IMR-90 (cell line): ENCODE measurements at regions of chr6 and their contacts with region 1.

Region 1: DNA sequence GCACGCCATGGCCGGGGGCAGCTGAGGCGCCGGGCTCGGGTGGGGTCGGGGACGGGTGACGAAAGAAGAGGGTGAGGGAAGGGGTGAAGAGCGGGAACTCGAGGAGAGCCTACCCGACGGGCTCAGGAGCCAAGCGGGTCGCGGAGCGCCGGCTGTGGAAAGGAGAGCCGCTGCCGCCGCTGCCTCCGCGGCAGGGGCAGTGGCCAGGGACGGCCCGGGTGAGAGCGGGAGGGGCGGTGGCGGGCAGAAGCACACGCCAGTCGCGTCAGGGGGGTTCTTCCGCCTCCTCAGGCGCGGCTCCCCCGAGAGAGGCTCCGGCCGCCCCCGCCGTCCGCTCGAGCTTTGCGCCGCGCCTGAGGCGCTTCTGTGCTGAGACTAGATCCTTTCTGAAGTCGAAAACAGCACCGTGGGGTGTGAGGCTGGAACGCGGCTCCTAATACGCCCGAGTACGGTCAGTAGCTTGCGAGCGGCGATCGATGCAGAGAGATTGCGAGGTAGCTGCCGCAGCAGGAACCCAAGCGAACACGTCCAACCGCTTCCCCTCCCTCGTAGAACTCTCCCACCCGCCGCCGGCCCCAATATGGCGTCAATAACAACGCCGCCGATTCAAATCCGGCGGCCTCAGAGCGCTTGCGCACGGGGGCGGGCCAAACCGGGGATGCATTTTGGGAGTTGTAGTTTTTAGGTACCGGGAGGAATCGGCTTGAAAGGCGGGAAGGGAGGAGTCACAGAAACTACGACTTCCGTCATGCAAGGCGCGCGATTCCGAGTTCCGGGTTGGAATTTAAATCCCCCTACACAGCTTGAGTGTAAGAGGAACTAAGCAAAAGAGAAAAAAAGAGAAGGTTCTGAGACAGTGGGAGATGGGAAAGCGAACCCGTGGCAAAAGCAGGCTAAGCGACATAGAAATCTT is at the start of gene AKIRIN2:
- DNase-seq: peak; percentile 99
- ATAC-seq: peak; percentile 74
- H3K4me3 ChIP-seq: peak within 1 kb of the TSS; percentile 59
- H3K27ac ChIP-seq: peak within 1 kb of the TSS; percentile 87
- H3K4me1 ChIP-seq: peaks cover 10% of the 10 kb centered on the region
- H3K27me3 ChIP-seq: no peaks in the 10 kb centered on the region
- CTCF ChIP-seq: no peak
- POLR2A ChIP-seq: peak; percentile 97
- RAD21 ChIP-seq: no peak
- total RNA-seq, gene AKIRIN2: 7.9 and 10.8 TPM in 2 replicates

Region 2: DNA sequence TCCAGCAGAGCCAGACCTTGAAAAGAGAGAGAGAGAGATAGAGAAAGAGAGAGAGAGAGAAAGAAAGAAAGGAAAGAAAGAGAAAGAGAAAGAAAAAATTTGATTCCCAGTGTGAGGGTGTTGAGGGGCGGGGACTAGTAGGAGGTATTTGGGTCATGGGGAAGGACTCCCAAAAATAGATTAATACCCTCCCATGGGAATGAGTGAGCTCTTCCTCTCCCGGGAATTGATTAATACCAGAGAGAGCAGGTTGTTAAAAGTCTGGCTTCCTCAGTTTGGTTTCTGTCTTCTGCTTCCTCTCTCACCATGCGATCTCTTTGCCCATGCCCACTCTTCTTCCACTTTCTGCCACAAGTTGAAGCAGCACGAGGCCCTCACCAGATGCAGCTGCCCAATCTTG is 323.0 kb before region 1 on chr6:
- CTCF ChIA-PET with region 1: no interaction called
- POLR2A ChIA-PET with region 1: no interaction called
- dilution Hi-C with region 1: no loop called
- in situ Hi-C with region 1: no loop called
- intact Hi-C with region 1: no loop called
- DNase-seq: no peak
- ATAC-seq: no peak
- H3K4me3 ChIP-seq: no peak overlapping the region
- H3K27ac ChIP-seq: no peak overlapping the region
- H3K4me1 ChIP-seq: no peaks in the 10 kb centered on the region
- H3K27me3 ChIP-seq: no peaks in the 10 kb centered on the region
- CTCF ChIP-seq: no peak
- POLR2A ChIP-seq: no peak
- RAD21 ChIP-seq: no peak

Region 3: DNA sequence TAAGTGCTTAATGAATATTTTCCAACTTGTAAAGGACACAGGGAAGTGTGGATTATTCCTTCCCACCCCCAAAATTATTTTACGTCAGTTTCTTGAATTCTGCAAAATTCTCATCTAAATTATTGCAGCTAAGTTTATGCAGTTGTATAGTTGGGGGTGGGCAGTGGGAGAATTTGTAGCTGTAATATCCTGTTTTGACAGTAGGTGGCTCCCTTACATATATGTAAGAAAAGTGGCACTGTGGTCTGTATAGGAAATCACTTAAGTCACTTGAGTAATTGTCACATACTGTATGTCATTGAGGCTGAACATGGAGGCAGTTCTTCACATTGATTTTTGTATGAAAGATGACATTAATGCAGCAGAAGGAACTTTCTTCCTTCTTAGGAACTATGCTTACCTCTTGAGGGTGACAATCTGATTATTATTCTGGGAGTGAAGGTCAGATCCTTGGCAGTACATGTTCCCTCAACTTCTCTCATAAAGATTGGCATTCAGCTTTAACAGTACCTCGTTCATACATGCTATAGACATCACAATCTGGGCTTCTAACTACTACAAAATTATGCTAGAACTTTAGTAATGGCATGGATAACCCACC is 308.8 kb before region 1 on chr6:
- CTCF ChIA-PET with region 1: no interaction called
- POLR2A ChIA-PET with region 1: no interaction called
- dilution Hi-C with region 1: no loop called
- in situ Hi-C with region 1: no loop called
- intact Hi-C with region 1: loop called (anchors 2 kb)
- DNase-seq: peak; percentile 70
- ATAC-seq: peak; percentile 96
- H3K4me3 ChIP-seq: no peak overlapping the region
- H3K27ac ChIP-seq: no peak overlapping the region
- H3K4me1 ChIP-seq: no peaks in the 10 kb centered on the region
- H3K27me3 ChIP-seq: no peaks in the 10 kb centered on the region
- CTCF ChIP-seq: peak; percentile 71
- POLR2A ChIP-seq: no peak
- RAD21 ChIP-seq: peak; percentile 64

Region 4: DNA sequence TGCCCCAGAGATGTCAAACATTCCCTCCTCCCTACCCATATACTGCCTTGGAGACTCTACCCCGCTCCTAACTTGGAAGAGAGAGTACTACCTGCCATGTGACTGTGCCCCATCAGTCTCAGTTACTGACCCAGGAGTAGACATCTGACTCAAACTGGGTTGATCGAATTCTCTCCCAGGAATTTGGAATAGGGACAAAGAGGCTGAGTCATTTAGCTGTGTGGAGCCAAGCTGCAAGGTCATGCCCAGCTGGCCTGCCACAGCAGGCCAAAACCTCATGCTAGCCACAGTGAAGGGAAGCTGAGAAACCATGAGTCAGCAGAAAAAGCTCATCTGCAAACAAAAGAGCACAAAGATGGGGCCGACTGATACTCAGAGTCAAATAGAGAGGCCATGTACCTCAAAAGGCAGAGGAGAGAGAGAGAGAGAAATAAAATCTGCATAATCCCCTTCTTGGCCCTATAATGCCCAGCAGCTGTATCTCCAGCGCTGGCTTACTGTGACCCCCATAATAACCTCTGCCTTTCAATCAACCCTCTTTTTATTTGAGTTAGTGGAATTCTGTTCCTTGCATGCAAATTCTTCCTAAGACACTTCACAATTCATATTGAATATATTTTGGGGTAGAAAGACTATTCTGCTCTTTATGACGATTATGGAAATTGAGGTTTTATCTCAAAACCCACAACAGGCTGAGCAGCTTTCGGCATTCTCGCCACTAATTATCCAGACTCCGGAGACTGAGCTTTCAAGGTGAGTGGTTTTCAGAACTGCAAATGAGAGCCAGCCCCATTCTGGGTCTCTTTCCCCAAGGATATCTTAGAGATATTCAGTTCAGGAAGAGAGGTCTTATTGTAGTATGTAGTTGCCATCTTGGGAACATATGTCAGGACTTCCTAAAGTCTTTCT is 21.5 kb after region 1 on chr6:
- CTCF ChIA-PET with region 1: no interaction called
- POLR2A ChIA-PET with region 1: interaction called, 5 read pairs
- dilution Hi-C with region 1: no loop called
- in situ Hi-C with region 1: no loop called
- intact Hi-C with region 1: loop called (anchors 1 kb)
- DNase-seq: peak; percentile 95
- ATAC-seq: peak; percentile 81
- H3K4me3 ChIP-seq: no peak overlapping the region
- H3K27ac ChIP-seq: peak overlapping the region; percentile 95
- H3K4me1 ChIP-seq: peaks cover 24% of the 10 kb centered on the region
- H3K27me3 ChIP-seq: no peaks in the 10 kb centered on the region
- CTCF ChIP-seq: no peak
- POLR2A ChIP-seq: no peak
- RAD21 ChIP-seq: no peak

Region 5: GRCh38 chr6:87789198-87789899 is 87.4 kb after region 1 on chr6:
- CTCF ChIA-PET with region 1: interaction called, 3 read pairs
- POLR2A ChIA-PET with region 1: no interaction called
- dilution Hi-C with region 1: no loop called
- in situ Hi-C with region 1: no loop called
- intact Hi-C with region 1: loop called (anchors 2 kb)
- DNase-seq: peak; percentile 46
- ATAC-seq: peak; percentile 71
- H3K4me3 ChIP-seq: no peak overlapping the region
- H3K27ac ChIP-seq: peak overlapping the region; percentile 17; the same call in 1 of the 2 replicates
- H3K4me1 ChIP-seq: peaks cover 8% of the 10 kb centered on the region
- H3K27me3 ChIP-seq: peaks cover 2% of the 10 kb centered on the region; the same call in 1 of the 2 replicates
- CTCF ChIP-seq: no peak
- POLR2A ChIP-seq: no peak
- RAD21 ChIP-seq: no peak

Region 6: DNA sequence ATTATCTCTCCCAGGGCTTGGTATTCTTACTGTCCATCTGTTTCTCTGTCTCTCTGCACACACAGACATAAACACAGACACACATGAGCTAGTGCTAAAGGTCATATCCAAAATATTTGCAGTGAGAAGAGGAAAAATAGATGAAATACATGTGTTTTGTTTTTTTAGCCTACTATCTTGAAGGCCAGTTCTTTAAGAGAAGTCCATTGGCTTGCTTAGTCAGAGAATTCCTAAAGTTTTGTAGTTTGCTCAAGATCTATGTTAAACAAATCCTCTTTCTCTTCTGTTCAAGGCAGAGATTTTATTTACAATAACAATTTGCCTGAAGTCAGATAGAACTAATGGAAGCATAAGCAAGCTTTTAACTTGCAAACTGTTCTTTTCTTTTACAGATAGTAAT is 120.1 kb after region 1 on chr6:
- CTCF ChIA-PET with region 1: no interaction called
- POLR2A ChIA-PET with region 1: no interaction called
- dilution Hi-C with region 1: no loop called
- in situ Hi-C with region 1: no loop called
- intact Hi-C with region 1: loop called (anchors 2 kb)
- DNase-seq: peak; percentile 49
- ATAC-seq: peak; percentile 90
- H3K4me3 ChIP-seq: no peak overlapping the region
- H3K27ac ChIP-seq: no peak overlapping the region
- H3K4me1 ChIP-seq: no peaks in the 10 kb centered on the region
- H3K27me3 ChIP-seq: no peaks in the 10 kb centered on the region; the same call in 1 of the 2 replicates
- CTCF ChIP-seq: no peak
- POLR2A ChIP-seq: no peak
- RAD21 ChIP-seq: no peak

Region 7: DNA sequence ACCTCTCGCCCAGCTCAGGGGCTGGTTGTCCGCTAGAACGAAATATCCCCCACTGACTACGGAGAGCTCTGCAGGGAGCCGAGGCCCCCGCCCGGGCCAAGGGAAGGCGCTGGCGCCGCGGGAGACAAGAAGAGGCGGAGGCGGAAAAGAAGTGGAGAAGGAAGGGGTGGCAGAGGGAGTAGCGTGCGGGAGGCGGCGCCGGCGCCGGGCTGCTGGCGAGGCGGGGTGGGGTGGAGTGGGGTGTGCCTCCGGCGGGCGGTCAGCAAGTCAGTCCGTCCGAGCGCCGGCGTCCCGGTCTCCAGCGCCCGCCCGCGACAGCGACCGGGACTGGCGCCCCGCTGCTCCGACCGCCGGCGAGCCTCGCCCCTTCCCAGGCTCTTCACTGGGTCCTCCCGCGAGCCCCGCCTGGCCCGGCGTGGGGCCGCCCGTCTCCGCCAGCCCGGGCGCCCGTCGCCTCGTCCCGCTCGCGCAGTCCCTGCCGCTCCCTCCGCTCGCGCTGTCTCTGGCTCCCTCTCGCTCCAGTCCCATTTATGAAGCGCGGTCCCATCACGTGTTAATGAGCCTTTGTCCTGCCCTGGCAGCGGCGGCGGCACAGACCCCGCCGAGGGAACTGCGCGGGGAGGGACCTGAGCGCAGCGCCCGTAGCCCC is 464.0 kb after region 1 on chr6 and contains the start of gene CNR1:
- CTCF ChIA-PET with region 1: no interaction called
- POLR2A ChIA-PET with region 1: no interaction called
- dilution Hi-C with region 1: no loop called
- in situ Hi-C with region 1: no loop called
- intact Hi-C with region 1: loop called (anchors 10 kb)
- DNase-seq: no peak
- ATAC-seq: peak; percentile 83
- H3K4me3 ChIP-seq: peak within 1 kb of the TSS; percentile 29
- H3K27ac ChIP-seq: no peak within 1 kb of the TSS
- H3K4me1 ChIP-seq: peaks cover 2% of the 10 kb centered on the region; the same call in 1 of the 2 replicates
- H3K27me3 ChIP-seq: peaks cover 46% of the 10 kb centered on the region
- CTCF ChIP-seq: no peak
- POLR2A ChIP-seq: no peak
- RAD21 ChIP-seq: no peak
- total RNA-seq, gene CNR1: not detected in 2 replicates

Region 8: DNA sequence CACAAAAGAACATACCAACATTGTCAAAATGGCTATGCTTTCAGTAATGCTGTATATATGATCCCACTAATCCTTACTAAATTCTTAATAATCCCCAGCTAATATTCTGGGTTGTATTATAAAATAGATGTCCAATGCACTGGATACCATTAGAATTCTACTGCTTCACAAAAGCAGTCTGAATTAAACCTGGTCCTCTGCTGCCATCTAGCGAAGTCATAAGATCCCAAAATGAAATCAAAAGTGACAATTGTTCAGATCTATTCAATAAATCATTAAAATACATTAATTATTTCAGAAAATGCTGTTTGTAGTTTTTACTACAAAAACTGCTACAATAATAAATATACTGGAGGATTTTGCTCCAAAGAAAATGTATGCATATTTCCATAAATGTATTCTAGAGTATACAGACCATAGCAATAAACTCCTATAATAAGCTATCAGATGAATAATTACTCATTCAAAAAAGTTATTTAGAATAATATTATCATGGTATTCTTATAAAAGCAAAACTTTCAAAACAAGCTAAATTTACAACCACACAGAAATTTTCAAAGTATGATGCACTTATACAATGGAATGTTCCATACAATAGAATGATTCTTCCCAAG is 1168.9 kb after region 1 on chr6:
- CTCF ChIA-PET with region 1: no interaction called
- POLR2A ChIA-PET with region 1: interaction called, 4 read pairs
- dilution Hi-C with region 1: no loop called
- in situ Hi-C with region 1: no loop called
- intact Hi-C with region 1: loop called (anchors 5 kb)
- DNase-seq: peak; percentile 74
- ATAC-seq: no peak
- H3K4me3 ChIP-seq: no peak overlapping the region
- H3K27ac ChIP-seq: no peak overlapping the region
- H3K4me1 ChIP-seq: peaks cover 7% of the 10 kb centered on the region
- H3K27me3 ChIP-seq: no peaks in the 10 kb centered on the region
- CTCF ChIP-seq: peak; percentile 77
- POLR2A ChIP-seq: no peak
- RAD21 ChIP-seq: peak; percentile 81